ENCODE measurements at regions of chr6 and their contacts with region 1.

Region 1: GRCh38 chr6:139250296-139251044 is 41.3 kb downstream of the TXLNB start:
- DNase-seq: peak; percentile 32
- ATAC-seq: peak; percentile 100
- H3K4me3 Mint-ChIP-seq: no peak overlapping the region
- H3K27ac Mint-ChIP-seq: no peak overlapping the region
- H3K4me1 Mint-ChIP-seq: peaks cover 12% of the 10 kb centered on the region
- H3K27me3 Mint-ChIP-seq: no peaks in the 10 kb centered on the region
- CTCF ChIP-seq: no peak

Region 2: GRCh38 chr6:139271056-139271455 is 20.6 kb after region 1 on chr6:
- CTCF ChIA-PET with region 1: interaction called, 6 read pairs
- POLR2A ChIA-PET with region 1: interaction called, 3 read pairs
- intact Hi-C with region 1: loop called (anchors 2 kb)
- DNase-seq: no peak
- ATAC-seq: peak; percentile 94
- H3K4me3 Mint-ChIP-seq: peak overlapping the region; percentile 75
- H3K27ac Mint-ChIP-seq: peak overlapping the region; percentile 96
- H3K4me1 Mint-ChIP-seq: peaks cover 80% of the 10 kb centered on the region
- H3K27me3 Mint-ChIP-seq: no peaks in the 10 kb centered on the region
- CTCF ChIP-seq: no peak

Region 3: GRCh38 chr6:139349464-139350020 is 99.1 kb after region 1 on chr6:
- CTCF ChIA-PET with region 1: no interaction called
- POLR2A ChIA-PET with region 1: no interaction called
- intact Hi-C with region 1: loop called (anchors 5 kb)
- DNase-seq: no peak
- ATAC-seq: no peak
- H3K4me3 Mint-ChIP-seq: no peak overlapping the region
- H3K27ac Mint-ChIP-seq: no peak overlapping the region
- H3K4me1 Mint-ChIP-seq: no peaks in the 10 kb centered on the region
- H3K27me3 Mint-ChIP-seq: no peaks in the 10 kb centered on the region
- CTCF ChIP-seq: no peak

Region 4: GRCh38 chr6:139422105-139423036 is 171.9 kb after region 1 on chr6:
- CTCF ChIA-PET with region 1: no interaction called
- POLR2A ChIA-PET with region 1: no interaction called
- intact Hi-C with region 1: no loop called
- DNase-seq: no peak
- ATAC-seq: no peak
- H3K4me3 Mint-ChIP-seq: no peak overlapping the region
- H3K27ac Mint-ChIP-seq: no peak overlapping the region
- H3K4me1 Mint-ChIP-seq: peaks cover 6% of the 10 kb centered on the region
- H3K27me3 Mint-ChIP-seq: no peaks in the 10 kb centered on the region
- CTCF ChIP-seq: no peak